Activated CD4-positive, alpha-beta T cell treated with anti-CD3 and anti-CD28 coated beads, Interleukin-2, amount 10 ng/mL, durations not matched to agents 7 days and 5 days (primary cell): ENCODE measurements at regions of chr3 and their contacts with region 1.

Region 1: DNA sequence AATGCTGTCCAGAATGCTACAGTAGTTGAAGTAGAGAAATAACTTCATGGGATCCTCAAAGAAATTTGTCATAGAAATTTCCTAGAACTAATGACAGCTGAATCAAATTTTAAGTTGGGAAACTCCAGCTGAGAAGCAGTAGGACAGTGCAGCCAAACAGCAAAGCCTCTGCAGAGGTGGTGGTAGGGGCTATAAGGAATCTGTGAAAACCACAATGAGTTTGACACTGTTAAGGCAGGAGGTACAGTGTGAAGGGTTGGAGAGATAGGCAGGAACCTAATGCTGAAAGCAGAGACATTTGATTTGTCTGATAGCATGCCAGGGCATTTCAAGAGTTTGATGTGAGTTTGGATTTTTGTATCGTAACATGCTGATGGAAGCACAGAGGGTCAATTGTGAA is 22.0 kb downstream of the ASTE1 start:
- DNase-seq: no peak
- H3K4me3 Mint-ChIP-seq: no peak overlapping the region
- H3K27ac Mint-ChIP-seq: peak overlapping the region; percentile 3
- H3K4me1 Mint-ChIP-seq: peaks cover 15% of the 10 kb centered on the region
- H3K27me3 Mint-ChIP-seq: no peaks in the 10 kb centered on the region

Region 2: GRCh38 chr3:130916507-130917167 is 88.0 kb before region 1 on chr3:
- CTCF ChIA-PET with region 1: no interaction called
- POLR2A ChIA-PET with region 1: no interaction called
- DNase-seq: no peak
- H3K4me3 Mint-ChIP-seq: no peak overlapping the region
- H3K27ac Mint-ChIP-seq: no peak overlapping the region
- H3K4me1 Mint-ChIP-seq: peaks cover 10% of the 10 kb centered on the region
- H3K27me3 Mint-ChIP-seq: no peaks in the 10 kb centered on the region

Region 3: GRCh38 chr3:131020122-131020693 is 15.6 kb after region 1 on chr3:
- CTCF ChIA-PET with region 1: interaction called, 10 read pairs
- POLR2A ChIA-PET with region 1: no interaction called
- DNase-seq: no peak
- H3K4me3 Mint-ChIP-seq: no peak overlapping the region
- H3K27ac Mint-ChIP-seq: no peak overlapping the region
- H3K4me1 Mint-ChIP-seq: peaks cover 42% of the 10 kb centered on the region
- H3K27me3 Mint-ChIP-seq: no peaks in the 10 kb centered on the region

Region 4: DNA sequence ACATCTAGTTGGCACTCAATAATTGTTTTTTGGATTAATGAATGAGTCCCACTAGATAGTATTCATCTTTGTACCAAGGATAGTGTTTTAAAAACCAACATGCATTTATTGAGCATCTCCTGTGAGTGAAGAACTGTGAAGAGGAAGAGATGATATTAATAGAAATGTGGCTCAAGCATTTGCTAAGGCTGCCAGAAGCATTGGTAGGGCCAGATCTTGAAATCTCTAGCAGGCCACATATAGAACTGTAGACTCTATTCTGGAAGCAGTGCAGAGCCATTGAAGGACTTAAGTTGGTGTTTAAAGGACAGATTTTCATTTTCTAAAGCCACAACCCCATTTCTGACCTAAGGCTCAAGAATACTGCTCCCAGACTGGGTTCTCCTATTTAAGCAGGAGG is 121.1 kb after region 1 on chr3:
- CTCF ChIA-PET with region 1: no interaction called
- POLR2A ChIA-PET with region 1: no interaction called
- DNase-seq: no peak
- H3K4me3 Mint-ChIP-seq: no peak overlapping the region
- H3K27ac Mint-ChIP-seq: no peak overlapping the region
- H3K4me1 Mint-ChIP-seq: no peaks in the 10 kb centered on the region
- H3K27me3 Mint-ChIP-seq: no peaks in the 10 kb centered on the region